Right ventricle myocardium superior (tissue), 1 donor: ENCODE measurements at regions of chr7 and their contacts with region 1.

Region 1: DNA sequence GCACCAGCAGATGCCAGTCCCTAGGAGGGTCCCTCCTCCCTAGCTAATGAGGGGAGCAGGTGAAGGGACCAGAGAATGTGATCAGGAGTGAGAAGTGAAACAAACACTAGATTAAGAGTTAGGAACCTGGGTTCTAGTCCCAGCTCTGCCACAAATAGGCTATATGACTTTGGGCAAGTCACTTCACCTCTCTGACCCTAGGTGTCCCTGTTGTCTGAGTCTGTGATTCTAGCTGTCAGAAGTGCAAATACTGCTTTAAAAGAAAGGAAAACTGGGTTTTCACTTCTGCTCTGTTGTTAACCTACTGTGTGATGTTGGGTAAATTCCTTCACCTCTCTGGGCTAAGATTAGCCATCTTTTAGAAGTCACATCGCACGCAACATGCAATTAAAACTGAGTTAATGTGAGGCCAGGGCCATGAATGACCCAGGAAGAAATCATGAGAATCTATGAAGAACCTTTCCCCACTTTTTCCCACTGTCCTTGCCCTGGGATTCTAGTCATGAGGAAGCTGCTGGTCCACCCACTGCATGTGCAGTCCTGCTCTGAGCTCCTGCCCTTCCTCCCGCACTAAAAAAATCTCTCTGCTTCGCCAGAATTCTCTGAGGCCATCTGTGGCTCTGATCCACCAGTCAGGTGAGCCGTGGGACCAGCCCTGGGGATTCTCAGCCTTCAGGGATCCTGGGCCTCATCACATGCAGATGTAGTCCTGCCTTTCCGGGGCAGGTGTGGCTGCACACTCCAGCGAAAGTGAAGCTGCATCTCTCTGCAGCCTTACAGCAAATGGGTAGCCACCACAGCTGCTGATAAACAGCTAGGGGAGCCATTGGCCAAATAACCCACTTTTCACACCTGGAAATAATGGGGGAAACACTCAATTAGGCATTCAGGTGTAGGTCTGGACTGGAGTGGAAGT is 181.7 kb downstream of the PLXNA4 start:
- DNase-seq: no peak
- ATAC-seq: peak; percentile 24

Region 2: GRCh38 chr7:132328047-132328620 is 66.4 kb before region 1 on chr7:
- intact Hi-C with region 1: loop called (anchors 5 kb)
- DNase-seq: peak; percentile 58
- ATAC-seq: peak; percentile 83

Region 3: GRCh38 chr7:132614428-132615318 is 220.1 kb after region 1 on chr7:
- intact Hi-C with region 1: no loop called
- DNase-seq: peak; percentile 73
- ATAC-seq: peak; percentile 77